Panc1 (cell line): ENCODE measurements at regions of chr17 and their contacts with region 1.

Region 1: DNA sequence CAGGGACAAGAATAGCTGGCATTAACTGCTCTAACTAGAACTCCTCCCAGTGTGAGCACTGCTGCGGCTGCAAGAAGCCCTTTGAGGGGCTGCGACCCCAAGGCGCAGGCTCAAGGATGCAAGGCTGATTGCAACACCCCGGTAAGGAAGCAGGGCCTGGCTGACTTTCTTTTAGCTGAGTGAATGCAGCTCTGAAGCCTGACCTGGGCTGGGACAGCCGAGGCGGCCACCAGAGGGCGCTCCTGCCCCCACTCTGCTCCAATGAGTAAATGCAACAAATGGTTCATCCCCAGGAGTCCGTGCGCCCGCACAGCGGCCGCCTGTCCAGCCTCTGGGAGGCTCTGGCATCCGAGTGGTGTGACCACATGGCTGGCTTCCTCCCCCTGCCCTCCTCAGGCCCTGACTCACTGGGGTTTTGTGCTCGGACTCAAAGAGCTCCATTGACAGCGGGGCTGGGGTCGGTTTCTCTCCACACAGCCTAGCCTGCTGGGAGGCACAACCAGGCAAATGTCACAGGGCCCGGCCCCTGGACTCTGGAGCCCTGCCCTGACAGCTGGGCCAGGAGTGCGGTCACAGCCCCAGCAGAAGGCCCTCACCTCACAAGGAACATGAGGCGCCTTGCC is at the start of gene SMIM5:
- DNase-seq: peak; percentile 35
- ATAC-seq: peak; percentile 85
- H3K4me3 ChIP-seq: no peak within 1 kb of the TSS
- H3K27ac ChIP-seq: peak within 1 kb of the TSS; percentile 65
- H3K4me1 ChIP-seq: peaks cover 25% of the 10 kb centered on the region
- H3K27me3 ChIP-seq: no peaks in the 10 kb centered on the region
- CTCF ChIP-seq: peak; percentile 99
- total RNA-seq, gene SMIM5: 0.10 TPM

Region 2: DNA sequence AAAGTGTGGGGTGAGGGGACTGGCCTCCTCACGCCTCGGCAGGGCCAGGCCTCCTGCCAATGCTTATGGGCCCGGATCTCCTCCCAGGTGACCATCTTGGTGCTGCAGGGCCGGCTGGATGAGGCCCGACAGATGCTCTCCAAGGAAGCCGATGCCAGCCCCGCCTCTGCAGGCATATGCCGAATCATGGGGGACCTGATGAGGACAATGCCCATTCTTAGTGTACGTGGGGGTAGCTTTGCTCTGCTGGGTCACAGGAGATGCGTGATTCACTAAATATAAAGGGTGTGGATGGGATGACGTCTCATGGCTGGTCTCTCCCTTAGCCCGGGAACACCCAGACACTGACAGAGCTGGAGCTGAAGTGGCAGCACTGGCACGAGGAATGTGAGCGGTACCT is 408.0 kb before region 1 on chr17:
- CTCF ChIA-PET with region 1: no interaction called
- POLR2A ChIA-PET with region 1: no interaction called
- in situ Hi-C with region 1: no loop called
- intact Hi-C with region 1: no loop called
- DNase-seq: no peak
- ATAC-seq: no peak
- H3K4me3 ChIP-seq: no peak overlapping the region
- H3K27ac ChIP-seq: no peak overlapping the region
- H3K4me1 ChIP-seq: no peaks in the 10 kb centered on the region
- H3K27me3 ChIP-seq: no peaks in the 10 kb centered on the region
- CTCF ChIP-seq: no peak

Region 3: GRCh38 chr17:75564188-75564587 is 68.8 kb before region 1 on chr17:
- CTCF ChIA-PET with region 1: interaction called, 17 read pairs
- POLR2A ChIA-PET with region 1: no interaction called
- in situ Hi-C with region 1: no loop called
- intact Hi-C with region 1: no loop called
- DNase-seq: no peak
- ATAC-seq: no peak
- H3K4me3 ChIP-seq: no peak overlapping the region
- H3K27ac ChIP-seq: peak overlapping the region; percentile 81
- H3K4me1 ChIP-seq: peaks cover 57% of the 10 kb centered on the region
- H3K27me3 ChIP-seq: no peaks in the 10 kb centered on the region
- CTCF ChIP-seq: no peak

Region 4: GRCh38 chr17:75601057-75602051 is 31.6 kb before region 1 on chr17:
- CTCF ChIA-PET with region 1: interaction called, 12 read pairs
- POLR2A ChIA-PET with region 1: no interaction called
- in situ Hi-C with region 1: no loop called
- intact Hi-C with region 1: no loop called
- DNase-seq: peak; percentile 33
- ATAC-seq: peak; percentile 80
- H3K4me3 ChIP-seq: no peak overlapping the region
- H3K27ac ChIP-seq: no peak overlapping the region
- H3K4me1 ChIP-seq: no peaks in the 10 kb centered on the region
- H3K27me3 ChIP-seq: no peaks in the 10 kb centered on the region
- CTCF ChIP-seq: peak; percentile 95

Region 5: GRCh38 chr17:75619506-75620431 is 13.2 kb before region 1 on chr17:
- CTCF ChIA-PET with region 1: interaction called, 15 read pairs
- POLR2A ChIA-PET with region 1: interaction called, 4 read pairs
- in situ Hi-C with region 1: no loop called
- intact Hi-C with region 1: no loop called
- DNase-seq: no peak
- ATAC-seq: peak; percentile 55
- H3K4me3 ChIP-seq: no peak overlapping the region
- H3K27ac ChIP-seq: no peak overlapping the region
- H3K4me1 ChIP-seq: no peaks in the 10 kb centered on the region
- H3K27me3 ChIP-seq: no peaks in the 10 kb centered on the region
- CTCF ChIP-seq: peak; percentile 87

Region 6: DNA sequence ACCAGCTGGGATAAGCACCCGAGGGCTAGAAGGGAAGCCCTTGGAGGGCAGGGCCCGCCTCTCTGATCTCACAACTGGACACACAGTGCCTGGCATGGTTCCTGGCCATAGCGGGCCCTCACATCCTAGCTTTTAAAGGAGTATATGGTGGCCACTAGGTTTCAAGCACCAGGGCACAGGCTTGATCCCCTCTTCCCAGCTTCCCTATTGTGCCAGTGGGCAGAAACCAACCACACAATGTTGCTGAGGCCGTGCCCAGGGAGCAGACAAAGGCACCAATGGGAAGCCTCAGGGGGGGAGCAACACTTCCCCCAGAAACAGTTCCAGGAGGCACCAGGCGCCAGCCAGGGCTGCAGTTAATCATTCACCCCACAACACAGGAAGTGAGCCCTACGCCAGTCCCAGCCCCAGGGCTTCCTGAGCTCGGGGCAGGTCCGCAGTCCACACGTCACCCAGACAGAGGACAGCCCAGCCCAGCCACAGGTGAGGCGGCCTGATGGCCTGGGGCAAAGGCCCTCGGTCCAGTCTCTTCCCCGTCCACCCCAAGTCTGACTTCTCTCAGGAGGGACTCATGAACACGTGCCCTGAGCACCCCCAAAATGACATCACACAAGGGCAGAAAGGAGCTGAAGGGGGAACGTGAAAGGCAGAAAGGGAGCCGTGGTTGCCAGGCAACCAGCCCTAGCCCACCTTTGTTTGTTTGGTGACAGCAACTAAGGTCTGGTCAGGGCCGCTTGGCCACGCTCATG is 13.1 kb after region 1 on chr17:
- CTCF ChIA-PET with region 1: interaction called, 15 read pairs
- POLR2A ChIA-PET with region 1: no interaction called
- in situ Hi-C with region 1: no loop called
- intact Hi-C with region 1: no loop called
- DNase-seq: no peak
- ATAC-seq: peak; percentile 22
- H3K4me3 ChIP-seq: no peak overlapping the region
- H3K27ac ChIP-seq: no peak overlapping the region
- H3K4me1 ChIP-seq: peaks cover 5% of the 10 kb centered on the region
- H3K27me3 ChIP-seq: no peaks in the 10 kb centered on the region
- CTCF ChIP-seq: no peak

Region 7: DNA sequence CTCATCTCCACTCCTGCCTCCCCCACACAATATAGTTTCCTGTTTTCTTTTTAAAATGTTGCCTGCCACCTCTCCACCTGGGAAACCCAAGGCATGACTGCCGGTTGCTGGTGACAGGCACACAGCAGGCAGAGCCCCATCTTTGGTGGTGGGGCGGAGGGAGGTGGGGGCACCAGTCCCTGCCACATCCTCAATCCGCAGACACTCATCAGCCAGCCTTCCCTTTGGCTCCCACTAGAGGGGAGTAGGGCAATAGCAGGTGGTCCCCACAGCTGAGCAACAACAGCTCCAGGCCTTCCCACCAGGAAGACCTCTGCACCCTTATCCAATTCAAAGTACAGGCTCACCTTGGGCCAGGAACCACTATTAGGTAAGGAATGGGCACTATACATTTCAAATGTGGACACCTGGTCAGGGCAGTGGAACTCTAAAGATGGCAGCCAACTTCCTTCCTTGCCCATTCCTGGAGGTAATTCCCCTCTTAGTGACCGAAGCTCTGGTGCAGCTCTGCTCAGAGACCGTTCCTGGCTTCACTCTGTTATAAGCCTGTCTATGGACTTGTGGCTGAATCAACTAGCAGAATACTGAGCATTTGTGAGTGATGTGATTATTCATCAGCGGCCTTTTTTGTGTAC is 20.1 kb after region 1 on chr17:
- CTCF ChIA-PET with region 1: interaction called, 45 read pairs
- POLR2A ChIA-PET with region 1: no interaction called
- in situ Hi-C with region 1: no loop called
- intact Hi-C with region 1: no loop called
- DNase-seq: no peak
- ATAC-seq: peak; percentile 84
- H3K4me3 ChIP-seq: no peak overlapping the region
- H3K27ac ChIP-seq: no peak overlapping the region
- H3K4me1 ChIP-seq: no peaks in the 10 kb centered on the region
- H3K27me3 ChIP-seq: no peaks in the 10 kb centered on the region
- CTCF ChIP-seq: peak; percentile 89

Region 8: GRCh38 chr17:75749545-75750389 is 116.8 kb after region 1 on chr17:
- CTCF ChIA-PET with region 1: interaction called, 86 read pairs
- POLR2A ChIA-PET with region 1: interaction called, 4 read pairs
- in situ Hi-C with region 1: no loop called
- intact Hi-C with region 1: loop called (anchors 1 kb)
- DNase-seq: peak; percentile 43
- ATAC-seq: peak; percentile 86
- H3K4me3 ChIP-seq: no peak overlapping the region
- H3K27ac ChIP-seq: no peak overlapping the region
- H3K4me1 ChIP-seq: peaks cover 1% of the 10 kb centered on the region; the same call in 1 of the 2 replicates
- H3K27me3 ChIP-seq: no peaks in the 10 kb centered on the region
- CTCF ChIP-seq: peak; percentile 98